ENCODE measurements at regions of chr16 and their contacts with region 1.

Region 1: GRCh38 chr16:50245417-50246298 is 20.7 kb upstream of the ADCY7 start:
- DNase-seq: peak; percentile 81
- ATAC-seq: peak; percentile 65
- H3K4me3 ChIP-seq: peak overlapping the region; percentile 84
- H3K27ac ChIP-seq: peak overlapping the region; percentile 95
- H3K4me1 ChIP-seq: peaks cover 23% of the 10 kb centered on the region
- H3K27me3 ChIP-seq: no peaks in the 10 kb centered on the region
- CTCF ChIP-seq: no peak

Region 2: GRCh38 chr16:50265260-50265659 is 19.6 kb after region 1 on chr16:
- CTCF ChIA-PET with region 1: no interaction called
- POLR2A ChIA-PET with region 1: no interaction called
- intact Hi-C with region 1: loop called (anchors 2 kb)
- DNase-seq: peak; percentile 21
- ATAC-seq: peak; percentile 33; the same call in 1 of the 2 replicates
- H3K4me3 ChIP-seq: no peak overlapping the region
- H3K27ac ChIP-seq: no peak overlapping the region
- H3K4me1 ChIP-seq: peaks cover 20% of the 10 kb centered on the region
- H3K27me3 ChIP-seq: no peaks in the 10 kb centered on the region
- CTCF ChIP-seq: peak; percentile 40

Region 3: GRCh38 chr16:50326949-50327402 is 81.3 kb after region 1 on chr16:
- CTCF ChIA-PET with region 1: no interaction called
- POLR2A ChIA-PET with region 1: no interaction called
- intact Hi-C with region 1: loop called (anchors 10 kb)
- DNase-seq: peak; percentile 58
- ATAC-seq: peak; percentile 68; the same call in 1 of the 2 replicates
- H3K4me3 ChIP-seq: no peak overlapping the region
- H3K27ac ChIP-seq: no peak overlapping the region
- H3K4me1 ChIP-seq: no peaks in the 10 kb centered on the region
- H3K27me3 ChIP-seq: no peaks in the 10 kb centered on the region
- CTCF ChIP-seq: peak; percentile 67

Measured in PC-3 (cell line).